ENCODE measurements at regions of chr4 and their contacts with region 1.

Region 1: GRCh38 chr4:184168406-184169019 is 49.2 kb downstream of the ENPP6 start:
- DNase-seq: peak; percentile 54 to 75
- H3K4me3 ChIP-seq: no peak overlapping the region
- H3K4me3 Mint-ChIP-seq: no peak overlapping the region
- H3K27ac Mint-ChIP-seq: no peak overlapping the region
- H3K4me1 ChIP-seq: peaks cover 7% of the 10 kb centered on the region
- H3K4me1 Mint-ChIP-seq: no peaks in the 10 kb centered on the region
- H3K27me3 ChIP-seq: no peaks in the 10 kb centered on the region
- H3K27me3 Mint-ChIP-seq: peaks cover 5% of the 10 kb centered on the region
- CTCF ChIP-seq: peak; percentile 79 to 90

Region 2: GRCh38 chr4:183840311-183840710 is 328.2 kb before region 1 on chr4:
- CTCF ChIA-PET with region 1: no interaction called
- POLR2A ChIA-PET with region 1: no interaction called
- intact Hi-C with region 1: loop called (anchors 1 kb)
- DNase-seq: peak; percentile 70 to 81
- H3K4me3 ChIP-seq: no peak overlapping the region
- H3K4me3 Mint-ChIP-seq: no peak overlapping the region
- H3K27ac Mint-ChIP-seq: no peak overlapping the region
- H3K4me1 ChIP-seq: no peaks in the 10 kb centered on the region
- H3K4me1 Mint-ChIP-seq: no peaks in the 10 kb centered on the region
- H3K27me3 ChIP-seq: no peaks in the 10 kb centered on the region
- H3K27me3 Mint-ChIP-seq: peaks cover 3% of the 10 kb centered on the region
- CTCF ChIP-seq: peak; percentile 71 to 83

Region 3: GRCh38 chr4:184250795-184251669 is 82.5 kb after region 1 on chr4:
- CTCF ChIA-PET with region 1: no interaction called
- POLR2A ChIA-PET with region 1: no interaction called
- intact Hi-C with region 1: loop called (anchors 1 kb)
- DNase-seq: peak in 1 of 2 experiments; percentile 53
- H3K4me3 ChIP-seq: no peak overlapping the region
- H3K4me3 Mint-ChIP-seq: no peak overlapping the region
- H3K27ac Mint-ChIP-seq: no peak overlapping the region
- H3K4me1 ChIP-seq: no peaks in the 10 kb centered on the region
- H3K4me1 Mint-ChIP-seq: no peaks in the 10 kb centered on the region
- H3K27me3 ChIP-seq: no peaks in the 10 kb centered on the region
- H3K27me3 Mint-ChIP-seq: no peaks in the 10 kb centered on the region
- CTCF ChIP-seq: peak; percentile 43 to 54